Heart left ventricle (tissue), 16 donors: ENCODE measurements at regions of chr11 and their contacts with region 1.

Region 1: DNA sequence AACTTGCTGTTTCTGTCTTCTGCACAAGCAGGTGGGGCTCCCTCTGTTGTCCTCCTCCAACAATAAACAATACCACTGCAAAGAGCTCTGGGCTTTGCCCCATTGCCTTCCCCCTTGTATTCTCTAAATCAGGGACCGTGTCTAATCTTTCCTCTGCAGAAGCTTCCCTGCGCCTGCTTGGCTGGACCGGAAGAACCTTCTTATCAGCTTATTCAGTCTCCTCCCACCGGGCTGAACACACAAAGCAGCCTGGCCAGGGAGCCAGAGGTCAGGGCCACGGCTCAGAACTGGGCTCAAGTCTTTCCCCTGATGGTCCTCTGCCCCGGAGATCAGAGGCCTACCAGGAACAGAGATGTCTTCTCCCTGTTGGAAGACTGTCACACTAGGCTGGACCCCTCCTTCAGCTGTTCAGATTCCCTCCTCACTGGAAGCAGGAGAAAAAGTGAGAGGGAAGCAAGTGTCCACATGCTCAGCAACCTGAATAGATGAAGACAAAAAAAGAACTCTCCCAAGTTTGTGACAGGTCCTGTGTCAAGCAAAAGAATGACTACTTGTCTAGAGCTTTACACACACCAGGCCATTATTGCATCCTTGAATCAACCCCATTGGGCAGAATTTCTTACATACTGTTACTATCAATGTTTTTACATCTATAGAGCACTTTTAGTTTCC is 63.7 kb downstream of the RAB30 start:
- DNase-seq: peak; percentile 59 to 78 (median 75)
- ATAC-seq: peak; percentile 82 to 94 (median 89)
- H3K4me3 ChIP-seq: peak overlapping the region in 1 of 12 donors; percentile 4
- H3K27ac ChIP-seq: peak overlapping the region; percentile 12 to 78 (median 68)
- H3K4me1 ChIP-seq: peaks cover 7 to 59% (median 42%) of the 10 kb centered on the region in 12 donors
- H3K27me3 ChIP-seq: no peaks in the 10 kb centered on the region
- CTCF ChIP-seq: no peak
- POLR2A ChIP-seq: no peak

Region 2: GRCh38 chr11:83051760-83052671 is 44.0 kb after region 1 on chr11:
- intact Hi-C with region 1: loop called in 1 of 10 experiments (anchors 5 kb)
- DNase-seq: peak in 4 of 5 donors; percentile 30 to 70 (median 64)
- ATAC-seq: peak; percentile 70 to 78 (median 74)
- H3K4me3 ChIP-seq: no peak overlapping the region
- H3K27ac ChIP-seq: peak overlapping the region in 11 of 12 donors; percentile 38 to 85 (median 66)
- H3K4me1 ChIP-seq: peaks cover 18 to 69% (median 50%) of the 10 kb centered on the region in 12 donors
- H3K27me3 ChIP-seq: no peaks in the 10 kb centered on the region
- CTCF ChIP-seq: no peak
- POLR2A ChIP-seq: no peak

Region 3: DNA sequence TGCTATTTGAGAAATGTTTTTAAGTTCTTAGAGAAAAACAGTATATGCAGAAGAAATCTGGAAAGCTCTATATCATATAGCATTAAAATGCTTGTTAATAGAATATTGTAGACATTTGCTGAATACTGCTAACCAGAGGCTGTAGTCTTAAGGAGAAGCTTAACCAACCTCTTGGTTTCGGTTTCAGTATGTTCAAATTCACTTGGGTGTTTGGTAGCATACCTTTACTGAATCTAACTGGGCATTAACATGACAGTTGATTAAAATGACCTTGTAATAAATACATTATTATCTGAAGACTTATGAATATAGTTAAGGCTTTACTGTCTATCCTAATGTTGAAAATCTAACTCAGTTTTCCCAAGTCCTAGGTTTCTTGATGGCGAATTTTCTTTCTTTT is 154.3 kb after region 1 on chr11:
- intact Hi-C with region 1: loop called in 1 of 10 experiments (anchors 10 kb)
- DNase-seq: no peak
- ATAC-seq: no peak
- H3K4me3 ChIP-seq: peak overlapping the region in 2 of 12 donors; percentile 10 to 13
- H3K27ac ChIP-seq: peak overlapping the region in 2 of 12 donors; percentile 49 to 99
- H3K4me1 ChIP-seq: peaks cover 2 to 53% (median 42%) of the 10 kb centered on the region in 12 donors
- H3K27me3 ChIP-seq: no peaks in the 10 kb centered on the region
- CTCF ChIP-seq: no peak
- POLR2A ChIP-seq: no peak